Right ventricle myocardium inferior (tissue), 1 donor: ENCODE measurements at regions of chr2 and their contacts with region 1.

Region 1: GRCh38 chr2:84925724-84926376 is 20.4 kb downstream of the TMSB10 start:
- DNase-seq: peak; percentile 97
- ATAC-seq: peak; percentile 82

Region 2: GRCh38 chr2:84495539-84496146 is 430.2 kb before region 1 on chr2:
- intact Hi-C with region 1: loop called (anchors 1 kb)
- DNase-seq: no peak
- ATAC-seq: peak; percentile 69

Region 3: GRCh38 chr2:84905181-84906107 is 20.4 kb before region 1 on chr2 and contains the start of gene TMSB10:
- intact Hi-C with region 1: loop called (anchors 1 kb)
- DNase-seq: peak; percentile 95
- ATAC-seq: peak; percentile 92
- total RNA-seq, gene TMSB10: 571 TPM

Region 4: DNA sequence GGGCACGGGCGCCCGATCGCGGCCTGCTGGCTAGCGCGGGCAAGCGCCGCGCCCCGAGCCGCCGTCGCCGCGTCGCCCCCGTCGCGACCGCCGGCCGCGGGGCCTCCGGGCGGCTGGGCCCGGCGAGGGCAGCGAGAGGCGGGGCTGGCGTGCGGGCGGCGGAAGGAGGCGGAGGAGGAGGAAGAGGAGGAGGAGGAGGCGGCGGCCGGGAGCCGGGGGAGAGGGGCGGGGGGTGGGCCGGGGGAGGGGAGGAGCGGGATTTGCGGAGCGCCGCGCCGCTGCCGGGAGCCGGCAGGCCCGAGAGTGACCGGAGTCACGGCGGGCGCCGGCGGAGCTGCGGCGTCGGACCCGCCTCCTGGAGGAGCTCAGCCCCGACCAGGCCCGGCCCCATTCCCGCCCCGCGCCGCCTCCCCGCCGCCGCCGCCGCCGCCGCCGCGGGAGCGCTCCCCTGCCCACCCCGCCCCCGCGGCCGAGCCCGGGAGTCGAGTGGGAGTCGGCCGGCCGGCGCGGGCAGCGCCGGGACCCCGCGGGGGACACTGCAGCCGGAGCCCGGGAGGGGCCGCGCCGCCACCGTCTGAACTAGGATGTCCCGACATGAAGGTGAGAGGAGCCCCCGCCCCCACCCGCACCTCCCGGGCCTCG is 45.1 kb after region 1 on chr2 and contains the start of gene KCMF1:
- intact Hi-C with region 1: loop called (anchors 5 kb)
- DNase-seq: peak; percentile 89
- ATAC-seq: peak; percentile 85
- total RNA-seq, gene KCMF1: 87.5 TPM

Region 5: GRCh38 chr2:85015653-85016360 is 90.0 kb after region 1 on chr2:
- intact Hi-C with region 1: loop called (anchors 2 kb)
- DNase-seq: no peak
- ATAC-seq: no peak

Region 6: DNA sequence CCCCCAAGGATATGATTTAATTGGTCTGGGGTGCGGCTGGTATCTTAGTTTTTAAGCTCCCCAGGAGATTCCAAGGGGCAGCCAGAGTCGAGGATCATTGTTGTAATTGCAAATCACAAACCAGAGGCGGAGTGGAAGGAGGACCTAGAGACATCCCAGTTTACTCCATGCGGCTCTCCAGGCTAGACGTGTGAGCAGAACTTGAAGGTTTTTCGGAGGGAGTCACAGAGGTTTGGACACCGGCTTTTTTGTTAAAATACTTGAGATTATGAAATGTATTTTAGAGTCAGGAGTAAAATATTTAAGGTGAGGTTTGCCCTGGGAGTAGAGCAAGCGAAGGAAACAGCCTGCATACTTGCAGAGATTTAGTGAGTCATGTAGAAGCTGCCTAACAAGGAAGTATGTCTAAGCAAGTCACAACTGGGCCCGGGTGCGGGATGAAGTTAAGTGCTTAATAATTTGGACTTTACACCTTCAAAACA is 362.4 kb after region 1 on chr2:
- intact Hi-C with region 1: loop called (anchors 10 kb)
- DNase-seq: no peak
- ATAC-seq: no peak